PC-9 (cell line): ENCODE measurements at regions of chr9 and their contacts with region 1.

Region 1: GRCh38 chr9:4774209-4774608 is 18.5 kb upstream of the RCL1 start:
- DNase-seq: no peak
- H3K4me3 ChIP-seq: no peak overlapping the region
- H3K27ac ChIP-seq: no peak overlapping the region
- H3K4me1 ChIP-seq: no peaks in the 10 kb centered on the region
- H3K27me3 ChIP-seq: no peaks in the 10 kb centered on the region
- CTCF ChIP-seq: no peak

Region 2: GRCh38 chr9:4970970-4971641 is 196.9 kb after region 1 on chr9:
- CTCF ChIA-PET with region 1: no interaction called
- POLR2A ChIA-PET with region 1: interaction called, 11 read pairs
- intact Hi-C with region 1: no loop called
- DNase-seq: no peak
- H3K4me3 ChIP-seq: no peak overlapping the region
- H3K27ac ChIP-seq: no peak overlapping the region
- H3K4me1 ChIP-seq: no peaks in the 10 kb centered on the region
- H3K27me3 ChIP-seq: no peaks in the 10 kb centered on the region
- CTCF ChIP-seq: no peak